Gastrocnemius medialis (tissue), 4 donors: ENCODE measurements at regions of chr17 and their contacts with region 1.

Region 1: GRCh38 chr17:17496189-17497064 is at the start of gene RASD1:
- DNase-seq: peak; percentile 88 to 90
- ATAC-seq: peak; percentile 69 to 78
- H3K4me3 ChIP-seq: peak within 1 kb of the TSS; percentile 80 to 93 (median 90)
- H3K27ac ChIP-seq: peak within 1 kb of the TSS; percentile 82 to 97 (median 94)
- H3K4me1 ChIP-seq: peaks cover 10 to 26% of the 10 kb centered on the region in 2 donors
- H3K27me3 ChIP-seq: no peaks in the 10 kb centered on the region
- CTCF ChIP-seq: peak; percentile 80 to 99 (median 98)
- POLR2A ChIP-seq: peak; percentile 100
- total RNA-seq, gene RASD1: 61.3 to 264 (median 102) TPM

Region 2: GRCh38 chr17:17041571-17042380 is 454.7 kb before region 1 on chr17:
- in situ Hi-C with region 1: no loop called
- intact Hi-C with region 1: loop called (anchors 10 kb)
- DNase-seq: peak; percentile 97 to 99
- ATAC-seq: peak; percentile 69 to 78
- H3K4me3 ChIP-seq: peak overlapping the region; percentile 42 to 66 (median 62)
- H3K27ac ChIP-seq: peak overlapping the region; percentile 87 to 99 (median 94)
- H3K4me1 ChIP-seq: peaks cover 52 to 58% of the 10 kb centered on the region in 2 donors
- H3K27me3 ChIP-seq: no peaks in the 10 kb centered on the region
- CTCF ChIP-seq: no peak
- POLR2A ChIP-seq: peak; percentile 45 to 69

Region 3: DNA sequence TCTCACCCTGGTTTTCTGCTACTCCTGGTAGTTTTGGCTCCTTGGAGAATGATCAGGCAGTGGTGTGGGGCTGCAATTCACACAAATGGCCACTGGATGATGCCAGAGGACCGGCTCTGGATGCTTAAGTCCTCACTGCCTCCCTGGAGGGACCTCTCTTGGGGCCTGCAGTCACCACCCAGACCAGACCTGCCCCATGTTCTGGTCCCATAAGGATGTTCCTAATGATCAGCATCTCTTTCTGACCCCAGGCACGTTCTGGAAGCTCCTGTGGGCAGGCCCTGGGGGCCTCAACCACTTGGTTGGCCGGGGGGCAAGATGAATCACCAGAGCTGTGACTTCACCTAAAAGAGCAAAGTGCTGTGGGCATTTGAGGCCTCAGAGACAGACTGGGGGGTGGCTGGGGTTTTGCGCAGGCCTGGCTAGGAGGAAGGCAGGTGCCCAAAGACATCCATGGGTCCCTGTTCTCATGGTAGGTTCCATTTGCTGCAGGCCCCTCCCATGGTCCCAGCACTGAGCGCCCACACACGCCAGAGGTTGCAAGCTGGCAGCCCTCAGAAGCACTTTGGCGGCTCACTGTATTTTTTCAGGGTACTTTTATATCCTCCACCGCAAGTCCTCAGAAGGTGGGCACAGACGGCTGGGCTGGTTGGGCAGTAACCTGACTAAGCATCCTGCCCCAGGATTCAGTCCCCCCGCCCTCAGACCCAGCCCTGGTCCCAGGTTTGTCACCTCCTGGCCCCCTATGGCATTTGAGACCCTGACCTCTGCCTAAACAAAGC is 140.1 kb before region 1 on chr17:
- in situ Hi-C with region 1: loop called in 3 of 4 experiments (anchors 10 kb)
- intact Hi-C with region 1: loop called (anchors 1 kb)
- DNase-seq: peak; percentile 55 to 77
- ATAC-seq: peak; percentile 79 to 83
- H3K4me3 ChIP-seq: no peak overlapping the region
- H3K27ac ChIP-seq: no peak overlapping the region
- H3K4me1 ChIP-seq: peaks cover 0 to 5% of the 10 kb centered on the region in 2 donors
- H3K27me3 ChIP-seq: no peaks in the 10 kb centered on the region
- CTCF ChIP-seq: peak; percentile 98 to 100 (median 99)
- POLR2A ChIP-seq: no peak

Region 4: GRCh38 chr17:17476865-17477467 is 19.5 kb before region 1 on chr17 and contains the start of gene MED9:
- in situ Hi-C with region 1: no loop called
- intact Hi-C with region 1: loop called (anchors 2 kb)
- DNase-seq: peak; percentile 83 to 91
- ATAC-seq: peak; percentile 96 to 99
- H3K4me3 ChIP-seq: peak within 1 kb of the TSS; percentile 68 to 98 (median 97)
- H3K27ac ChIP-seq: peak within 1 kb of the TSS; percentile 89 to 99 (median 98)
- H3K4me1 ChIP-seq: peaks cover 40 to 46% of the 10 kb centered on the region in 2 donors
- H3K27me3 ChIP-seq: no peaks in the 10 kb centered on the region
- CTCF ChIP-seq: peak in 2 of 5 experiments; percentile 17 to 20
- POLR2A ChIP-seq: peak; percentile 55 to 78
- total RNA-seq, gene MED9: 20.4 to 33.7 (median 27.7) TPM

Region 5: DNA sequence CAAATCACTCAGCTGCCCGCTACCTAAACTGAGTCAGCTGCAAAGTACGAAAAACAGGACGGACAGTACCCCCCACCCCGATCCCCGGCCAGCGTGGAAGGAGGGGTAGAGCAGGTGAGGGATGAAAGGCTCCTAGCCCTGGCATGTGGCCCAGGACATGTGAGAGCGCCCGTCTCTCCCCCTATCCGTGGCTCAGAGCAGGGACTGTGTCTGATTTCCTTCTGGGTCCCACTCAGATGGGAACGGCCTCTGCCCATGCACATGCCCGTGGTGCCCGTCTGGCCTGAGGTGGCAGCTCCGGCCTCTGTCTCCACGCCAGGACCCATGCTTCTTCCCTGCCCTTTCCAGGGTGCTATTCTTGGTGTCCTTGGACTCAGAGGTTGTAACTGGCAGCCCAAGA is 29.9 kb after region 1 on chr17:
- in situ Hi-C with region 1: no loop called
- intact Hi-C with region 1: loop called (anchors 1 kb)
- DNase-seq: peak; percentile 94 to 96
- ATAC-seq: peak; percentile 70 to 83
- H3K4me3 ChIP-seq: peak overlapping the region in 1 of 4 donors; percentile 33
- H3K27ac ChIP-seq: peak overlapping the region; percentile 86 to 97 (median 92)
- H3K4me1 ChIP-seq: peaks cover 24 to 38% of the 10 kb centered on the region in 2 donors
- H3K27me3 ChIP-seq: no peaks in the 10 kb centered on the region
- CTCF ChIP-seq: peak in 1 of 5 experiments; percentile 16
- POLR2A ChIP-seq: peak; percentile 12 to 49

Region 6: DNA sequence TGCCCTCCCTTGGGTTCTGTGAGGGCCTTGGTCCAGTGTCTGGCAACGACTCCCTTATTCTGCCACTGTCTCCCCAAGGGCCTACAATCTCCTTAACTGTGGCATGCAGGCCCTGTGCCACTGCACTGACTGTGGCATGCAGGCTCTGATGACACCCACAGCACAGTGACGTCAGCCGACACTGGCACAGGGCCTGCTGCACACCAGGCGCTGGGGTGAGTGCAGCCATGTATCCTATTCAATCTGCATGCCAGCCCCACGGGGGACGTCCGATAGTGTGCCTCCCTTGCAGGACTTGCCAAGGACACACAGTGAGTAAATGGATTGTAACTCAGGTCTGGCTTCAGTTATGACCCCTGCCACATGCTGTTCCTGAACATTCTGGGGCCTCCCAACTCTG is 39.5 kb after region 1 on chr17:
- in situ Hi-C with region 1: no loop called
- intact Hi-C with region 1: loop called (anchors 2 kb)
- DNase-seq: peak; percentile 88 to 95
- ATAC-seq: peak; percentile 79 to 90
- H3K4me3 ChIP-seq: no peak overlapping the region
- H3K27ac ChIP-seq: peak overlapping the region; percentile 85 to 92 (median 86)
- H3K4me1 ChIP-seq: peaks cover 27 to 41% of the 10 kb centered on the region in 2 donors
- H3K27me3 ChIP-seq: no peaks in the 10 kb centered on the region
- CTCF ChIP-seq: no peak
- POLR2A ChIP-seq: peak; percentile 36

Region 7: DNA sequence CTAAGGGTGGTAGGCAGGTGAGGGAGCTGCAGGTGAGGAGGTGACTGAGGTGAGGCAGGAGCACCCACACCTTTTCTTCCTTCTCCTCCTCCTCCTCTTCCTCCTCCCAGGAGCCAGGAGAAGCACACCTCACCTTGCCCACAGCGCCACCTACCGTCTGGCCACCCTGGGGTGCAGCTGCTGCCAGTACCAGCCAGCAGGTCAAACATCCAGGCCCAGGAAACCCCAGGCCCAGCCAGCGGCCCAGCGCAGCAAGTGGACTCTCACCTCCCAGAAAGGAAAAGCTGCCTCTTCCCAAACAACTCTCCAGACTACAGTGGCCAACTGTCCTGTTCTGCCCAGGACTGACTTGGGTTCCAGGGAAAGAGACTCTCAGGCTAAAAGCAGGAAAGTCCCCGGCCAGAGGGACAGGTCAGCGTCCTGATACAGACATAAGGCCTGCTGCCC is 72.3 kb after region 1 on chr17:
- in situ Hi-C with region 1: loop called (anchors 5 kb)
- intact Hi-C with region 1: loop called (anchors 1 kb)
- DNase-seq: peak; percentile 65 to 79
- ATAC-seq: peak; percentile 36
- H3K4me3 ChIP-seq: no peak overlapping the region
- H3K27ac ChIP-seq: peak overlapping the region; percentile 89 to 96 (median 94)
- H3K4me1 ChIP-seq: peaks cover 56 to 57% of the 10 kb centered on the region in 2 donors
- H3K27me3 ChIP-seq: no peaks in the 10 kb centered on the region
- CTCF ChIP-seq: peak; percentile 80 to 93 (median 90)
- POLR2A ChIP-seq: no peak